CD4-positive, alpha-beta memory T cell (primary cell): ENCODE measurements at regions of chr16 and their contacts with region 1.

Region 1: GRCh38 chr16:75464130-75464918 is at the start of gene TMEM170A:
- DNase-seq: peak; percentile 97 to 99 (median 98)
- H3K4me3 ChIP-seq: peak within 1 kb of the TSS; percentile 47 to 91
- H3K4me3 Mint-ChIP-seq: peak within 1 kb of the TSS; percentile 91 to 98 (median 95)
- H3K27ac ChIP-seq: peak within 1 kb of the TSS; percentile 90
- H3K27ac Mint-ChIP-seq: peak within 1 kb of the TSS; percentile 88 to 98 (median 97)
- H3K4me1 ChIP-seq: peaks cover 40% of the 10 kb centered on the region
- H3K4me1 Mint-ChIP-seq: peaks cover 33 to 50% (median 42%) of the 10 kb centered on the region in 4 donors
- H3K27me3 ChIP-seq: no peaks in the 10 kb centered on the region
- H3K27me3 Mint-ChIP-seq: no peaks in the 10 kb centered on the region
- total RNA-seq, gene TMEM170A: 50.7 to 54.3 TPM

Region 2: DNA sequence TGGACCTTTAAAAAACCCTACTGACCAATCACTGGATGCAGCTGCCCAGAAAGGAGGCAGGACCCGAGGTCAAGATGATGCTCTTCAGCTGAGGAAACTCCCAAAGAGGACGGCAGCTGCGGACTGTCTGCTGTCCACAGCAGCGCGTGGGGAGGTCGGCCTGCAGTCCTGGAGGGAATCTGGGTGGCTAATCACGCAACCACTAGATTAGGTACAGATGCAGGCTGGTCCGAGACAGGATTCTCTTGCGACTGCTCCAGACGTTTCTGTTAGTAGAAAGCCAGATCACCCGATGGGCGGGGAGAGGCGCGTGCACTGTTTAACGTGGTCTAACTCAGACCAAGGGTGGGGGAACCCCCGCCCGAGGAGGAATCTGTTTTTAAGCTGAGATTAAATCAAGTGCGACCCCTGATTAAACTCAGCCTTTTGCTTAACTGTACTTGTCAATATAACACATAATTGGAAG is 266.2 kb before region 1 on chr16:
- CTCF ChIA-PET with region 1: interaction called, 36 read pairs
- POLR2A ChIA-PET with region 1: no interaction called
- intact Hi-C with region 1: no loop called
- DNase-seq: no peak
- H3K4me3 ChIP-seq: no peak overlapping the region
- H3K4me3 Mint-ChIP-seq: no peak overlapping the region
- H3K27ac ChIP-seq: no peak overlapping the region
- H3K27ac Mint-ChIP-seq: no peak overlapping the region
- H3K4me1 ChIP-seq: peaks cover 14% of the 10 kb centered on the region
- H3K4me1 Mint-ChIP-seq: peaks cover 12 to 22% (median 14%) of the 10 kb centered on the region in 4 donors
- H3K27me3 ChIP-seq: no peaks in the 10 kb centered on the region
- H3K27me3 Mint-ChIP-seq: peaks cover 10 to 14% of the 10 kb centered on the region in 2 donors

Region 3: DNA sequence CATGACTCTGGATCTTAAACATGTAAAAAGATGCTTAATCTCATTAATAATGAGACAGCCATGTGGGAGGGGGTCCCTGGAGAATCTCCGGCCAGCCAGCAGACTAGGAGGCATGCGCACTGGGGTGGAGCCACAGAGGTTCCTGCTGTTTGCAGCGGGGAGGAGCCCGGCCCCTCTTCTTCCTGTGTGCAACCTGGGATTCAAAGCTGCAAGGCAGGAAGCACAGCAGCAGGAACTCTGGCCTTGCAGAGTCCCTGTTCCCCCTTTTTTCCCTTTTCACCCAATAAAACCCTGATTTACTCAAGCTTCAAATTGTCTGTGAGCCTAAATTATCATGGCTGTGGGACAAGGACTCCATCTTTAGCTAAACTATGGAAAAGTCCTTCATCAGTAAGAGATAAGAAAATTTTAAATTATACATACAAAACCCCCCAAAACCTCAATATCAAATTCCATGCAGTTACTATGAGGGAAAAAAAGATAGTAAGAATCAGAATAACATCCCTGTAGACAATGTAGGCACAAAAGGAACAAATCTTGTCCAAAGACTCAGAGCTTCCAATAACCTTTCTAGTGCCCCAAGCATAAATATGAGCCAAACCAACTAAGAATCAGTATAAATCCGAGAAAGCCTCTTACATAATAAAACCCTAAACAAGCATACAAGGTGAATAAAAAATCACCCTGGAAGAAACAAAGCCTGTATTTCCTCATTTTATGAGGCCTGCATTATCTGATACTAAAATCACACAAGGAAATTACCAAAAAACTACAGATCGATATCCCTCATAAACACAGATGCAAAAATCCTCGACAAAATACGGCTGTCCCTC is 43.1 kb before region 1 on chr16:
- CTCF ChIA-PET with region 1: interaction called, 6 read pairs
- POLR2A ChIA-PET with region 1: no interaction called
- intact Hi-C with region 1: loop called (anchors 5 kb)
- DNase-seq: no peak
- H3K4me3 ChIP-seq: no peak overlapping the region
- H3K4me3 Mint-ChIP-seq: peak overlapping the region in 7 of 8 donors; percentile 9 to 70 (median 33)
- H3K27ac ChIP-seq: no peak overlapping the region
- H3K27ac Mint-ChIP-seq: peak overlapping the region; percentile 37 to 82 (median 54)
- H3K4me1 ChIP-seq: peaks cover 18% of the 10 kb centered on the region
- H3K4me1 Mint-ChIP-seq: peaks cover 16 to 33% (median 27%) of the 10 kb centered on the region in 4 donors
- H3K27me3 ChIP-seq: no peaks in the 10 kb centered on the region
- H3K27me3 Mint-ChIP-seq: no peaks in the 10 kb centered on the region

Region 4: GRCh38 chr16:75519881-75520280 is 55.6 kb after region 1 on chr16:
- CTCF ChIA-PET with region 1: interaction called, 46 read pairs
- POLR2A ChIA-PET with region 1: interaction called, 5 read pairs
- intact Hi-C with region 1: loop called (anchors 1 kb)
- DNase-seq: no peak
- H3K4me3 ChIP-seq: no peak overlapping the region
- H3K4me3 Mint-ChIP-seq: no peak overlapping the region
- H3K27ac ChIP-seq: no peak overlapping the region
- H3K27ac Mint-ChIP-seq: no peak overlapping the region
- H3K4me1 ChIP-seq: peaks cover 8% of the 10 kb centered on the region
- H3K4me1 Mint-ChIP-seq: peaks cover 10 to 20% (median 16%) of the 10 kb centered on the region in 4 donors
- H3K27me3 ChIP-seq: no peaks in the 10 kb centered on the region
- H3K27me3 Mint-ChIP-seq: no peaks in the 10 kb centered on the region

Region 5: DNA sequence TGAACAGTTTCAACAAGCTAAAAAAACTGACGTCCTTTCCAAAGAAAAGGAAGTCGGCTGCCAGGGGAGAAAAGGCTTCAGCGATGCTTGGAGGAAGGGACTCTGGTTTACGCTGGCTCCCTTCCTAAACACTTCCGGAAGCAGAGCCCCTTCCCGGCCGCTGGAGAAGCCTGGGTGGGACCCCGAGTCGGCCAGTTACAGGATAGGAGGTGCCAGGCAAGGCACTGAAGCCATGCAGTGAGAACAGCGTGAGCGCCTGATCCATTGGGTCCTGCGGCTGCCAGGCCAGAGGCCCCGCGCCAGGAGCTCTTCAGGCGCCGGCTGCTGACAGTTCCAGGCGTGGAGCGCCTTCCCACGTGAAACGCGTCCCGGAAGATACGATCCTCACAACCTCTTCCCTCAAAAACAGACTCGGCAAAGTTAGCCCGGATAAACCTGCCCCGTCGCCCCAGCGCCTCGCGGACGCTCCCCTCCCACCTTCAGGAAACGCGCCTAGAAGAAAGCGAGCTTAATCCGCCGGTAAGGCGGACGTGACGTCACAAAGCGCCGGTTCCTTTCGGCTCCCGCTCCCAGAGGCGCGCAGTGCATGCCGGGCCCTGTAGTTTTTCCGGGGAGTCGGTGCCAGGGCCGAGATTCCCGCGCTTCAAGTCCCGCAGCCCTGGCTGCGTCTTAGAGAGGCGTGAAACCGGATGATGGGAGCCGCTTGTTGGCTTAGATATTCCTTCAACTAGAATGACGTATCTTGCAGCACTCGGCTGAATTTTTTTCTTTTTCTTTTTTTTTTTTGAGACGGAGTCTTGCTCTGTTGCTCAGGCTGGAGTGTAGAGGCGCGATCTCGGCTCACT is 158.7 kb after region 1 on chr16 and contains the start of gene ADAT1:
- CTCF ChIA-PET with region 1: interaction called, 7 read pairs
- POLR2A ChIA-PET with region 1: interaction called, 11 read pairs
- intact Hi-C with region 1: loop called (anchors 1 kb)
- DNase-seq: peak; percentile 95 to 99 (median 98)
- H3K4me3 ChIP-seq: peak within 1 kb of the TSS; percentile 86 to 90
- H3K4me3 Mint-ChIP-seq: peak within 1 kb of the TSS; percentile 90 to 98 (median 97)
- H3K27ac ChIP-seq: peak within 1 kb of the TSS; percentile 96
- H3K27ac Mint-ChIP-seq: peak within 1 kb of the TSS; percentile 97 to 99 (median 98)
- H3K4me1 ChIP-seq: peaks cover 59% of the 10 kb centered on the region
- H3K4me1 Mint-ChIP-seq: peaks cover 46 to 87% (median 58%) of the 10 kb centered on the region in 4 donors
- H3K27me3 ChIP-seq: no peaks in the 10 kb centered on the region
- H3K27me3 Mint-ChIP-seq: peaks cover 0 to 3% of the 10 kb centered on the region in 2 donors
- total RNA-seq, gene ADAT1: 88.3 to 93.9 TPM

Region 6: DNA sequence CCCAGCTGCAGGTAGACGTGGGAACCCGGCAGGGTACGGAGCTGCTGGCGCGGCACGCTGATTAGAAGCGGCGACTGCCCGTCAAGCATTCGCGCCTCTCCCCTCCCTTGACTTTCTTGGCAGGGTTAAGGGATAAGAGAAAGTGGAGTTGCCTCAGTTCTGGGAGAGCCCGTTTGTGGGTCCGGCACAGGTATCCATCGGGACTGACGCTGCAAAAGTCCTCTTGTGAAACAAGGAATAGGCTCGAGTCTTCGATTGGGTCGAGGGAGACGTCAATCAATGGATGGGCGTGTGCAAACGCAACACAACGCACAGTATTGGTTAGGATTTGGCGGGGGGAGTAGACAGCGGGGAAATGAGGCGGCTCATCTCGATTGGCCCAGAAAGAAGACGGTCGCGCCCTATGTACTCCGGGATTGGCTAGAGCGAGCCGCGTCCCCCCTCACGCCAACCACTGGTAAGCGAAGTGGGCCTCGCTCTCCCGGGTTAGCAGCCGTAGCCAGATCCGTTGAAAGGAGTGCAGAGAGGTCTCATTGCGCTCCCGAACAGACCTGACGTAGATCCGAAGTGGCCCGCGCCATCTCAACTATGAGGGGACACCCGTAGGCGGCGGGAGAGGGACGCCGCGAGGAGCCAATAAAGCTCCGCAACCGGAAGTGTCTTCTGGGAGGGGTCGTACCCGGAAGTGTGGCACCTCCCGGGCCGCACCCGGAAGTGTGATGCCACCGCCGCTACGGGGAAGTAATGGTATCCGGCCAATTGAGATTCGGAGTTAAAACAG is 1726.3 kb after region 1 on chr16 and contains the start of gene MON1B:
- CTCF ChIA-PET with region 1: no interaction called
- POLR2A ChIA-PET with region 1: no interaction called
- intact Hi-C with region 1: loop called (anchors 5 kb)
- DNase-seq: peak; percentile 97 to 98 (median 98)
- H3K4me3 ChIP-seq: peak within 1 kb of the TSS; percentile 97 to 99
- H3K4me3 Mint-ChIP-seq: peak within 1 kb of the TSS; percentile 94 to 100 (median 98)
- H3K27ac ChIP-seq: peak within 1 kb of the TSS; percentile 93
- H3K27ac Mint-ChIP-seq: peak within 1 kb of the TSS; percentile 98 to 100 (median 99)
- H3K4me1 ChIP-seq: peaks cover 27% of the 10 kb centered on the region
- H3K4me1 Mint-ChIP-seq: peaks cover 31 to 50% (median 38%) of the 10 kb centered on the region in 4 donors
- H3K27me3 ChIP-seq: no peaks in the 10 kb centered on the region
- H3K27me3 Mint-ChIP-seq: no peaks in the 10 kb centered on the region
- total RNA-seq, gene MON1B: 82.4 to 85.4 TPM